PC-9 (cell line): ENCODE measurements at regions of chr19 and their contacts with region 1.

Region 1: DNA sequence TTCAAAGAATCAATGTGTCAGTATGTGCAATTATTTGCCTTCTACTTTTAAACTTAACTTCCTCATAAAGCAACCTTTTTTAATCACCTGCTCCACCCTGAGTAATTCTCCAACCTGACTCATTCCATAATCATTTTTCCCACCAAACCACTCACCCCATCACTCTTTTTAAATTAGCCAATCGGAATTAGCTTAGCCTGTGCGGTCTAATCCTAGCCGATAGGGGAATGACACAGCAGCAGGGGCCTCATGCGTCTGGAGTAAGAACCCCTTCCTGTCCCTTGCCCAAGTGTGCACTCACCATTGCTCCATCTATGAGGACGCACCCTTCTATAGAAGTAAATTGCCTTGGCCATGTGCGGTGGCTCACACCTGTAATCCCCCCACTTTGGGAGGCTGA is 27.4 kb upstream of the ZNF83 start:
- DNase-seq: peak; percentile 21 to 79
- H3K4me3 ChIP-seq: no peak overlapping the region
- H3K27ac ChIP-seq: peak overlapping the region; percentile 70
- H3K4me1 ChIP-seq: peaks cover 13% of the 10 kb centered on the region
- H3K27me3 ChIP-seq: no peaks in the 10 kb centered on the region
- CTCF ChIP-seq: no peak

Region 2: GRCh38 chr19:53132141-53132991 is 466.8 kb after region 1 on chr19 and contains the start of gene ZNF415:
- CTCF ChIA-PET with region 1: no interaction called
- POLR2A ChIA-PET with region 1: interaction called, 23 read pairs
- intact Hi-C with region 1: no loop called
- DNase-seq: peak; percentile 70 to 86
- H3K4me3 ChIP-seq: peak within 1 kb of the TSS; percentile 52; the same call in 1 of the 2 replicates
- H3K27ac ChIP-seq: no peak within 1 kb of the TSS
- H3K4me1 ChIP-seq: no peaks in the 10 kb centered on the region
- H3K27me3 ChIP-seq: no peaks in the 10 kb centered on the region
- CTCF ChIP-seq: no peak
- total RNA-seq, gene ZNF415: 9.6 and 12.9 TPM in 2 replicates